ENCODE measurements at regions of chr1 and their contacts with region 1.

Region 1: DNA sequence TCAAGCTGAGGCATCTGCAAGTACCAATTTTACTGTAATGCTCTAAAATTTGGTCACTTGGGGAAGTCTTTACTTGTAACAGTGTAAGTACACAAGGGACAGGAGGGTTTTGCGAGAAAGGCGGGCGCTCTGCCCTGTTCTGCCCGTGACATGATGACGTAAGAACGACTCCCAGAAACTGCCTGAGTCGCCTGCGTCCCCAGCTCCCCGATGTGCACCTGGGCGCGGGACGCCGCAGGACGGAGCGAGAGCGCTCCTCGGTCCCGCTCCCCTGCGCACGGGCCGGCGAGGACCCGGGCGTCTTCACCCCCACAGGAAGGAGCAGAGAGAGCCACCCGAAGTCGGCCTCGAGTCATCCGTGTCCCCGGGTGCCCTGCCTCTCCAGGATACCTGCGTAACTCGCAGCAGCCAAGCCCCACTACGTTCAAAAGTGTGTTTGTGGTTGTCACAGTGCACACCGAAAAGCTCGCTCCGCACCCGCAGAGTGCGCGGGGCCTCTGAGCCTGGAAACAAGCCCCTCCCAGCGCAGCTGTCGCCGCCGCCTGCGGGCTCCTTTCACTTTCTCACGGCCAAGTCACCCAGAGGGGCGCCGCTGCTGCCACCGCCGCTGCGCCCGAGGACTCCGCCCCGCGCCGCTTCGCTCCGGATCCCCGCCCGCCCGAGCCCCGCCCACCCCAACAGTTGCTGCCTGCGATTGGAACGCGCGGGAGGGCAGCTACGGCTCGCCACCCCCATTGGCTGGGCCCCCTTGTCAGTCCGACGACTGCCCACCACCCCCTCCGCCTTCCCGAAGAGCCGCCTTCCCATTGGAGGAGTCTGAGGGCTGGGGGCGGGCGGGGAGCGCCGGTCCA is 3.2 kb upstream of the ZBTB18 start:
- DNase-seq: peak; percentile 100
- H3K4me3 ChIP-seq: peak overlapping the region; percentile 66 to 86 (median 77)
- H3K27ac ChIP-seq: peak overlapping the region; percentile 93
- H3K4me1 ChIP-seq: peaks cover 33% of the 10 kb centered on the region
- H3K27me3 ChIP-seq: no peaks in the 10 kb centered on the region
- CTCF ChIP-seq: no peak
- POLR2A ChIP-seq: peak; percentile 85

Region 2: GRCh38 chr1:243343970-243344937 is 703.6 kb before region 1 on chr1:
- CTCF ChIA-PET with region 1: interaction called, 8 read pairs
- POLR2A ChIA-PET with region 1: no interaction called
- dilution Hi-C with region 1: no loop called
- intact Hi-C with region 1: loop called (anchors 5 kb)
- DNase-seq: peak; percentile 51
- H3K4me3 ChIP-seq: no peak overlapping the region
- H3K27ac ChIP-seq: no peak overlapping the region
- H3K4me1 ChIP-seq: peaks cover 17% of the 10 kb centered on the region
- H3K27me3 ChIP-seq: no peaks in the 10 kb centered on the region
- CTCF ChIP-seq: peak; percentile 20 to 37
- POLR2A ChIP-seq: no peak

Region 3: GRCh38 chr1:243850452-243851256 is 197.2 kb before region 1 on chr1:
- CTCF ChIA-PET with region 1: no interaction called
- POLR2A ChIA-PET with region 1: interaction called, 3 read pairs
- dilution Hi-C with region 1: no loop called
- intact Hi-C with region 1: loop called (anchors 1 kb)
- DNase-seq: peak; percentile 80
- H3K4me3 ChIP-seq: peak overlapping the region; percentile 36 to 71 (median 61)
- H3K27ac ChIP-seq: peak overlapping the region; percentile 93
- H3K4me1 ChIP-seq: peaks cover 17% of the 10 kb centered on the region
- H3K27me3 ChIP-seq: no peaks in the 10 kb centered on the region
- CTCF ChIP-seq: no peak
- POLR2A ChIP-seq: peak; percentile 28

Region 4: DNA sequence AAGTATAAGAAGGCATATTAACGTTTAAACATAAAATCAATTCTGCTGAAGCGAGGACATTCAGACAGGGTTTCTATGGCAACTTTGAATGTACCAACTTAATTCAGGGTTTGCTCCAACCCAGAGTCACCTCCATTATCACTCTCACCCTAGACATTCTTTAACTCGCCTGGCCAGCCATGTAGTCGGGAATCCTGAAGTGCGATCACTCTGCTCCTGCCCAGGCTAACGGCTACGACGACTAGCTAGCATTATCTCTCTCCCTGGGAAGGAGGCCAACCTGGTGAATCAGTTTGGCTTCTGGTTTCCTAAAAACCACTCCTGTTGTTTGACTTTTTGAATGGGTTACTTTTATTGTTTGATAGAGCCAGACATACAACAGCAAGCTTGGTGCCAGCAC is 35.6 kb before region 1 on chr1:
- CTCF ChIA-PET with region 1: interaction called, 3 read pairs
- POLR2A ChIA-PET with region 1: no interaction called
- dilution Hi-C with region 1: no loop called
- intact Hi-C with region 1: loop called (anchors 1 kb)
- DNase-seq: peak; percentile 74
- H3K4me3 ChIP-seq: peak overlapping the region in 1 of 3 experiments; percentile 25
- H3K27ac ChIP-seq: no peak overlapping the region
- H3K4me1 ChIP-seq: peaks cover 24% of the 10 kb centered on the region
- H3K27me3 ChIP-seq: no peaks in the 10 kb centered on the region
- CTCF ChIP-seq: no peak
- POLR2A ChIP-seq: no peak

Region 5: GRCh38 chr1:244084438-244085162 is 36.8 kb after region 1 on chr1:
- CTCF ChIA-PET with region 1: interaction called, 4 read pairs
- POLR2A ChIA-PET with region 1: interaction called, 3 read pairs
- dilution Hi-C with region 1: no loop called
- intact Hi-C with region 1: loop called (anchors 2 kb)
- DNase-seq: peak; percentile 94
- H3K4me3 ChIP-seq: no peak overlapping the region
- H3K27ac ChIP-seq: no peak overlapping the region
- H3K4me1 ChIP-seq: no peaks in the 10 kb centered on the region
- H3K27me3 ChIP-seq: peaks cover 6 to 11% of the 10 kb centered on the region in 2 experiments
- CTCF ChIP-seq: no peak
- POLR2A ChIP-seq: no peak

Region 6: GRCh38 chr1:244163861-244164562 is 116.2 kb after region 1 on chr1:
- CTCF ChIA-PET with region 1: interaction called, 4 read pairs
- POLR2A ChIA-PET with region 1: interaction called, 4 read pairs
- dilution Hi-C with region 1: no loop called
- intact Hi-C with region 1: loop called (anchors 1 kb)
- DNase-seq: peak; percentile 95
- H3K4me3 ChIP-seq: peak overlapping the region in 1 of 3 experiments; percentile 18
- H3K27ac ChIP-seq: peak overlapping the region; percentile 99
- H3K4me1 ChIP-seq: peaks cover 32% of the 10 kb centered on the region
- H3K27me3 ChIP-seq: no peaks in the 10 kb centered on the region
- CTCF ChIP-seq: no peak
- POLR2A ChIP-seq: peak; percentile 52

Region 7: DNA sequence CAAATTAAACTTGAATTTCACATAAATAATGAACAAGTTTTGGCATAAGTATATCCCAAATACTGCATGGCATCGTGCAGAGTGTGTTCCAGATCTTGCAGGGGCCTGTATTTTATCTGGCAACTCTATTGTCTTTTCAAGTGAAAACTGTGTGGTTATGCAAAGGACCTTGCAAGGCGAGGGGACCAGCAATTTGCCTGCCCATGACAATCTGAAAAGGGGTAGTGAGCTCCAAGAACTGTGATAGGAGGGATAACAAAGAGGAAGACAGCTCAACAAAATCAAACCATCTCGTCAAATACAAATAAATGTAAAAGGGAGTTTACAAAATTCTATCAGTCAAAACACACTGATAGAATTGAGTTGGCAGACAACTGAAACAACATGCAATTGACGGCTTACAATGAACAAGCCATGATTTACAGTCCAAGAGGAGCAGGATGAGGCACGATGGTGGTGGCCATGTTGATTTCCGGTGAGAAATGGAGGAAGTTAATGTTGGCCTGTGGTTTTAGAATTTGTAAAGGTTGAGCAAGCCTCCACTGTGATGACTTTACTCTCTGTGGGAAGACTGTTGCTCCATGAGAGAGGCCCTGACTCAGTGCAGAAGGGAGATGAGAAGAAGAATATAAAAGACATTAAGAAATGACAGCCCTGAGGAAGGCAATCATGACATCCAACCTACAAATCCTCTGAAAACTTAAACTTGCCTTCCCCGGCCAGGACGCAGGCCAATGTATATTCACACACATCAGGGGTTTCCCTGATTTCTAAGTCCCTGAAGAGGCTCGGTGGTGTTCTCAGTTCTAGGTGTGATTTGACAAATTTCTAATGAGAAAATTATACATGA is 271.7 kb after region 1 on chr1:
- CTCF ChIA-PET with region 1: no interaction called
- POLR2A ChIA-PET with region 1: no interaction called
- dilution Hi-C with region 1: no loop called
- intact Hi-C with region 1: loop called (anchors 5 kb)
- DNase-seq: no peak
- H3K4me3 ChIP-seq: no peak overlapping the region
- H3K27ac ChIP-seq: peak overlapping the region; percentile 16
- H3K4me1 ChIP-seq: peaks cover 49% of the 10 kb centered on the region
- H3K27me3 ChIP-seq: no peaks in the 10 kb centered on the region
- CTCF ChIP-seq: no peak
- POLR2A ChIP-seq: no peak

Region 8: DNA sequence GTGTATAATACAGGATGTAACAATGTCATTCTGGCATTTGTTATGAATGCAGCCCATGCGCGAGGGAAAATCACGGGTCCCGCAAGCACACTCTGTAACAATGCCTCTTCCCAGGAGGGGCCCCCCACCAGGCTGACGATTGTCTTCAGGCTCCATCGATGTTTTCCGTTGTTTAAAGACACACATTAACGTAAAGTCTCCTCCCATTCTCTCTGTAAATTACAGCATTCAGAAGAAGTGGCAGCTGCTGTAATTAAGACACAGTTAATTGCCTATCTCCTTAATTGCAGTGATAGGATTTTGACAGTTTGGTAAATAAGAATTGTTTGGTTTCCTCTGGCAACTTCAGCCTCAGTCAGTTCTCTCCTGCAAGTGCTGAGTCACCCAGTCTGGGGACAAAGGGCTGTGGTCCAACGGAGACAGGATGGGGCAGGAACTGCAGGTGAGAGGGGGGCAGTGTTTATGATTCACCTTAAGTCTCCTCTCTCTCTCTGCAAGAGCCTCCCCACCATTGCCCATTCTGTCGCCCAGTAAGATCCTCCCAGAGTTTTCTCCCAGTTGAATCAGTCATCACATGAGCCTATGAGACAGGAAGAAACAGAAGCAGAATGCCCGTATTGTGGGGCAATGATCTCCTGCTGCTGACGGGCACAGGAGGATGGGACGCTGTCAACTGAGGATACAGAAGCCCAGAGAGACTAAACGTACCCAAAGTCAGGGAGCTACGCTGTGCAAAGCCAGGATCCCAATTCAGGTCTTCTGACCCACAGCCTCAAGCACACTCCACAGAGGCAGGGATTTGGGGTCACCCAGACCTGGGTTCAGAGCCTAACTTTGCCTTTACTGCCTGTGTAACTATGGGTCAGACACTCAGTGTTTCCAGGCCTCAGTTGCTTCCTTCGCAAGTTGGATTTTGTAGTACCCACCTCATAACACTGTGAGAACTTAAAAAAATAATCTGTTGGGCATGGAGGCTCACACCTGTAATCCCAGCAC is 293.9 kb after region 1 on chr1:
- CTCF ChIA-PET with region 1: no interaction called
- POLR2A ChIA-PET with region 1: no interaction called
- dilution Hi-C with region 1: no loop called
- intact Hi-C with region 1: no loop called
- DNase-seq: peak; percentile 93
- H3K4me3 ChIP-seq: no peak overlapping the region
- H3K27ac ChIP-seq: peak overlapping the region; percentile 56
- H3K4me1 ChIP-seq: peaks cover 16% of the 10 kb centered on the region
- H3K27me3 ChIP-seq: no peaks in the 10 kb centered on the region
- CTCF ChIP-seq: no peak
- POLR2A ChIP-seq: peak; percentile 17